HEK293 (cell line): ENCODE measurements at regions of chr16 and their contacts with region 1.

Region 1: GRCh38 chr16:20806168-20807050 is at the starts of genes ERI2 and REXO5:
- H3K4me3 ChIP-seq: peak within 1 kb of the TSS; percentile 70
- H3K27ac ChIP-seq: peak within 1 kb of the TSS; percentile 96
- H3K4me1 ChIP-seq: no peaks in the 10 kb centered on the region
- CTCF ChIP-seq: peak; percentile 94

Region 2: DNA sequence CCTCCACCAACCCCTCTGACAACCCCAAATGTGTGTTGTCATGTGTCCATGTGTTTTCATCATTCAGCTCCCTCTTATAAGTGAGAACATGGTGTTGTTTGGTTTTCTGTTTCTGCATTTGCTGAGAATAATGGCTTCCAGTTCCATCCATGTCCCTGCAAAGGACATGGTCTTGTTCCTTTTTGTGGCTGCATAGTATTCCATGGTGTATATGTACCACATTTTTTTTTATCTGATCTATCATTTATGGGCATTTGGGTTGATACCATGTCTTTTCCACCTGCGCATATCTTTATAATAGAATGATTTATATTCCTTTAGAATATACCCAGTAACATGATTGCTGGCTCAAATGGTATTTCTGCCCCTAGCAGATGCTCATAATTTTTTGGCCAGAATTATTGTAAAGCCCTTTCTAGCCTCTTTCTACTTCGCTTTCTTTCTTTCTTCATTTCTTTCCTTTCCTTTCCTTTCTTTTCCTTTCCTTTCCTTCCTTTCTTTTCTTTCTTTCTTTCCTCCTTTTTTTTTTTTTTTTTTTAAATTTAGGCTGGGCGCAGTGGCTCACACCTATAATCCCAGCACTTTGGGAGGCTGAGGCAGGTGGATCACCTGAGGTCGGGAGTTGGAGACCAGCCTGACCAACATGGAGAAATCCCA is 12.6 kb after region 1 on chr16:
- CTCF ChIA-PET with region 1: no interaction called
- POLR2A ChIA-PET with region 1: interaction called, 10 read pairs
- H3K4me3 ChIP-seq: no peak overlapping the region
- H3K27ac ChIP-seq: no peak overlapping the region
- H3K4me1 ChIP-seq: no peaks in the 10 kb centered on the region
- CTCF ChIP-seq: no peak

Region 3: GRCh38 chr16:20833086-20833485 is 26.7 kb after region 1 on chr16:
- CTCF ChIA-PET with region 1: no interaction called
- POLR2A ChIA-PET with region 1: no interaction called
- H3K4me3 ChIP-seq: no peak overlapping the region
- H3K27ac ChIP-seq: no peak overlapping the region
- H3K4me1 ChIP-seq: no peaks in the 10 kb centered on the region
- CTCF ChIP-seq: no peak

Region 4: DNA sequence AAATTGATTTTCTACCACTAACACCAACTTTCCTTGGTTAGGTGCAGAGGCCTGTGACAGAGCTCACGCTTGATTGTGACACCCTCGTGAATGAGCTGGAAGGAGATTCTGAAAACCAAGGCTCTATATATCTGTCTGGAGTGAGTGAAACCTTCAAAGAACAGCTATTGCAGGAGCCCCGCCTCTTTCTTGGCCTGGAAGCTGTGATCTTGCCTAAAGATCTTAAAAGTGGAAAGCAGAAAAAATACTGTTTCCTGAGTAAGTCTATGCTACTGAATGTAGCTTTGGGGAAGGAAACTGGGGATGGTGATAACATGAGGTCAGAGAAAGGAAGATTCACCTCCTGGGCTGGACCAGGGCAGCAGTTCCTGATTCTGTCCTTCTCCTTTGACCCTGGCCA is 38.2 kb after region 1 on chr16:
- CTCF ChIA-PET with region 1: no interaction called
- POLR2A ChIA-PET with region 1: no interaction called
- H3K4me3 ChIP-seq: no peak overlapping the region
- H3K27ac ChIP-seq: no peak overlapping the region
- H3K4me1 ChIP-seq: no peaks in the 10 kb centered on the region
- CTCF ChIP-seq: no peak

Region 5: GRCh38 chr16:20900299-20901067 is 94.1 kb after region 1 on chr16 and contains the starts of genes DCUN1D3 and LYRM1:
- CTCF ChIA-PET with region 1: no interaction called
- POLR2A ChIA-PET with region 1: interaction called, 10 read pairs
- H3K4me3 ChIP-seq: peak within 1 kb of the TSS; percentile 83
- H3K27ac ChIP-seq: peak within 1 kb of the TSS; percentile 93
- H3K4me1 ChIP-seq: peaks cover 10% of the 10 kb centered on the region; the same call in 1 of the 2 replicates
- CTCF ChIP-seq: no peak